ENCODE measurements at regions of chr1 and their contacts with region 1.

Region 1: DNA sequence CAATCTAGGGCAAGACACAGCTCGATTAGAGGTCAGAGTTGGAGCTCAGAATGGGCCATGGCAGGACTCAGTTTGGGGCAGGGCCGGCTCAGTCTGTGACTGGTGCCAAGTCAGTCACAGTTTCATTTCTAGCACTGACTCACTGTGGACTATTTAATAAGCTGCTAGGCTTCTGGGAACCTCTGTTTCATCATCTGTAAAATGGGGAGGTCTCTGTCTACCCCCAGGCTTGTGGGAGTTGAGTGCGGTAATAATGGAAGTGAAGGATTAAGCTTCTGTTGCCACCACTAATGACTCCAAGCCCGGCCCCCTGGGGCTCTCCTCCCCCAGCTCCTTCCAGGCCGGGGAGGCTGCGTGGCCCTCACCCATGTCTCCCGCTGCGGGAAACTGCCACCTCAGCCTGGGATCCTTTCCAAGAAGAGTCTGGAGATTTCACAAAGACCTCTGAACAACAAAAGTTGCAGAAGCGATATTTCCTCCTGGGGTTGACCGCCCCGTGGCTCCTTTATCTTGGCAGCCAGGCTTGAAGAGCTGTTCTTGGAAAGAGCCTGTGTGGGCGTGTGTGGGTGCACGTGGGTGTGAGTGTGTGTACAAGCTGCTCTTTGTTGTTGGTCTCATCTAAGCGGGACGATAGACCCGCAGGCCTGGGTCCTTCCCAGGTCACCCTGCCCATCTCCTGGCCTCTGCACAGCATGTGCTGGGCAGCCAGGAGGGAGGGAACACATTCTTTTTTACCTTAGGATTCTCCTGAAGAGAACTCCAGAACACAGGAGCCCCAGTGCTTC is 29.1 kb downstream of the KNCN start:
- DNase-seq: peak; percentile 89 to 99 (median 93)
- ATAC-seq: peak; percentile 77
- H3K4me3 ChIP-seq: no peak overlapping the region
- H3K27ac ChIP-seq: peak overlapping the region; percentile 85
- H3K4me1 ChIP-seq: peaks cover 89 to 95% of the 10 kb centered on the region in 2 experiments
- H3K27me3 ChIP-seq: no peaks in the 10 kb centered on the region
- CTCF ChIP-seq: no peak
- EP300 ChIP-seq: peak; percentile 95
- POLR2A ChIP-seq: 0 out of 2 replicates have a peak, but pooled peaks have one; percentile 26
- RAD21 ChIP-seq: peak; percentile 12 to 40; a peak in 3 of 4 replicates

Region 2: GRCh38 chr1:46487818-46488218 is 34.6 kb before region 1 on chr1:
- CTCF ChIA-PET with region 1: interaction called, 13 read pairs
- POLR2A ChIA-PET with region 1: interaction called, 7 read pairs
- in situ Hi-C with region 1: no loop called
- intact Hi-C with region 1: loop called (anchors 1 kb)
- DNase-seq: peak; percentile 64 to 86 (median 76)
- ATAC-seq: peak; percentile 79
- H3K4me3 ChIP-seq: no peak overlapping the region
- H3K27ac ChIP-seq: no peak overlapping the region
- H3K4me1 ChIP-seq: peaks cover 10 to 75% of the 10 kb centered on the region in 2 experiments
- H3K27me3 ChIP-seq: no peaks in the 10 kb centered on the region
- CTCF ChIP-seq: peak; percentile 78 to 87 (median 80)
- EP300 ChIP-seq: peak; percentile 19; the same call in 1 of the 2 replicates
- POLR2A ChIP-seq: no peak
- RAD21 ChIP-seq: peak; percentile 56 to 81

Region 3: GRCh38 chr1:46503421-46503820 is 19.0 kb before region 1 on chr1:
- CTCF ChIA-PET with region 1: no interaction called
- POLR2A ChIA-PET with region 1: interaction called, 36 read pairs
- in situ Hi-C with region 1: no loop called
- intact Hi-C with region 1: loop called (anchors 2 kb)
- DNase-seq: no peak
- ATAC-seq: no peak
- H3K4me3 ChIP-seq: no peak overlapping the region
- H3K27ac ChIP-seq: no peak overlapping the region
- H3K4me1 ChIP-seq: peaks cover 17 to 23% of the 10 kb centered on the region in 2 experiments; a peak in 4 of 5 replicates
- H3K27me3 ChIP-seq: no peaks in the 10 kb centered on the region
- CTCF ChIP-seq: no peak
- EP300 ChIP-seq: no peak
- POLR2A ChIP-seq: no peak
- RAD21 ChIP-seq: no peak

Region 4: DNA sequence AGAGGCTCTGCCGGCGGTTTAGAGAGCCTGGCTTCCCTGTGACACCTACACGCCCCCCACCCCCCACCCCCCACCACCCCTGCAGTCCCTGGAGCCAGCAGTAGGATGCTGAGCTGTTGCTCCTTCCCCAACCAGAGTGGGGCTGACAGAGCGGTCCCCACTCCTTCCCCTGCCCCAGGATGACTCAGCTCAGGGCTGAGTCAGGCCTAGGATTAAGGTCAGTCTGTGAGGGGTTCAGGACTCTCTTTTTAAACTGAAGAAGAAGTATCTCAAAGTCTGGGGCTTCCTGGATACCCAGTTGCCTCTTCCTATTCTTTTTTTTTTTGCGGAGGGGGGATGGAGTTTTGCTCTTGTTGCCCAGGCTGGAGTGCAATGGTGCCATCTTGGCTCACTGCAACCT is 13.6 kb before region 1 on chr1:
- CTCF ChIA-PET with region 1: no interaction called
- POLR2A ChIA-PET with region 1: interaction called, 36 read pairs
- in situ Hi-C with region 1: no loop called
- intact Hi-C with region 1: loop called (anchors 2 kb)
- DNase-seq: peak; percentile 86 to 93 (median 88)
- ATAC-seq: peak; percentile 93
- H3K4me3 ChIP-seq: no peak overlapping the region
- H3K27ac ChIP-seq: peak overlapping the region; percentile 9; the same call in 1 of the 3 replicates
- H3K4me1 ChIP-seq: peaks cover 25 to 59% of the 10 kb centered on the region in 2 experiments; a peak in 4 of 5 replicates
- H3K27me3 ChIP-seq: no peaks in the 10 kb centered on the region
- CTCF ChIP-seq: peak in 1 of 3 experiments; percentile 7; a peak in 2 of 6 replicates
- EP300 ChIP-seq: no peak
- POLR2A ChIP-seq: no peak
- RAD21 ChIP-seq: no peak

Region 5: DNA sequence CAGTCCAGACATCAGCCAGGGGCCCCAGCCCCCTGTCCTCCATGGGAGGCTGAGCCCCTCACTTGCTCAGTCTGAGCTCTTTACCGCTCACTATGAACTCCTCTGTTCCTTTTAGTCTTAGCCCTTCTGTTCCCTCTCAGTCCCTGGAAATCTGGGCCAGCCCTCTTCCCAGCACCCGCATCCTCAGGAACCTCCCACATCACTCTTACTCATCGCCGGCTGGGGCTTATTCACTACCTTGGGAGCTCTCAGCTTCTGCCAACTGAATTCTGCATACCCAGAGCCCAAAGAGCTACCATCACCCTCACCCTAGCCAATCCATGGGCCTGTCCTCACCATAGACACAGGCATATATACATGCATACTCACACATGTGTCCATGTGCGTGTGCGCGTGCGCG is 17.6 kb after region 1 on chr1:
- CTCF ChIA-PET with region 1: interaction called, 3 read pairs
- POLR2A ChIA-PET with region 1: interaction called, 15 read pairs
- in situ Hi-C with region 1: no loop called
- intact Hi-C with region 1: no loop called
- DNase-seq: peak in 1 of 4 experiments; percentile 14
- ATAC-seq: no peak
- H3K4me3 ChIP-seq: no peak overlapping the region
- H3K27ac ChIP-seq: no peak overlapping the region
- H3K4me1 ChIP-seq: peaks cover 12 to 22% of the 10 kb centered on the region in 2 experiments
- H3K27me3 ChIP-seq: no peaks in the 10 kb centered on the region
- CTCF ChIP-seq: no peak
- EP300 ChIP-seq: no peak
- POLR2A ChIP-seq: no peak
- RAD21 ChIP-seq: no peak

Region 6: DNA sequence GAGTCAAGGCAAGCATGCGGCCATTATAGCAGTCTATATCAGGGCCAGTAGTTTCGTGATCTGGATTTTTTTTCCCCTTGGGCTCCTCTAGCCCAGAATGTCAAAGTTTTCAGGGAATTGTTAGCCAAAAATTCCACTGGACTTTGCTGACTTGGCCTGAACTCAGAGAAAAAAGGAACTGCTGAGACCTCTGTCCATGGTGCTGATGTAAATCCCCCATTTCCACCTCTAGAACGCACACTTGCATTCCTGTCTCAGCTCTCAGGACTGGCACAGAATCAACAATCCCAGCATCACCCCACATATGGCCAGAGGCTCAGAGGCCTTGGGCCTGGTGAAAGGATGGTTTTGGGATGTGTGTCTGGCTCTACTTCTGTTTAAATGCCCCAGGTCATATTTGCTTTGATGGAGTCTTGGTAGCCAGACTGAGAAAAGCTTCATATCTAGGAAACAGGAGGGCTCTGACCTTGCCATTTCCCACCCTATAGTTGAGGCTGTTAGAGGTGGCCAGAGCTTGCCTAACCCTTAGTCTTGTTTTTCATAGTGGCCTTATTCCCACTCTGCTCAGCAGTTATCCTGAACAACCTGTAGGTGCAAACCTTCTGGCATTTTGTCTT is 213.4 kb after region 1 on chr1:
- CTCF ChIA-PET with region 1: no interaction called
- POLR2A ChIA-PET with region 1: no interaction called
- in situ Hi-C with region 1: no loop called
- intact Hi-C with region 1: no loop called
- DNase-seq: peak; percentile 56 to 75 (median 64)
- ATAC-seq: peak; percentile 94
- H3K4me3 ChIP-seq: no peak overlapping the region
- H3K27ac ChIP-seq: no peak overlapping the region
- H3K4me1 ChIP-seq: no peaks in the 10 kb centered on the region
- H3K27me3 ChIP-seq: no peaks in the 10 kb centered on the region; a peak in 1 of 5 replicates
- CTCF ChIP-seq: peak; percentile 62 to 71 (median 66)
- EP300 ChIP-seq: no peak
- POLR2A ChIP-seq: no peak
- RAD21 ChIP-seq: peak in 1 of 2 experiments; percentile 36; a peak in 1 of 4 replicates